ENCODE measurements at regions of chr12 and their contacts with region 1.

Region 1: GRCh38 chr12:100200463-100201181 is at the start of gene ACTR6:
- DNase-seq: peak; percentile 98
- ATAC-seq: peak; percentile 84
- H3K4me3 ChIP-seq: peak within 1 kb of the TSS; percentile 69 to 94 (median 92)
- H3K4me3 Mint-ChIP-seq: peak within 1 kb of the TSS; percentile 90
- H3K27ac ChIP-seq: peak within 1 kb of the TSS; percentile 76 to 93
- H3K27ac Mint-ChIP-seq: peak within 1 kb of the TSS; percentile 91
- H3K4me1 ChIP-seq: peaks cover 14 to 19% of the 10 kb centered on the region in 2 donors
- H3K4me1 Mint-ChIP-seq: peaks cover 26% of the 10 kb centered on the region
- H3K27me3 ChIP-seq: no peaks in the 10 kb centered on the region
- H3K27me3 Mint-ChIP-seq: no peaks in the 10 kb centered on the region
- CTCF ChIP-seq: no peak
- total RNA-seq, gene ACTR6: 28.6 and 30.8 TPM in 2 replicates

Region 2: DNA sequence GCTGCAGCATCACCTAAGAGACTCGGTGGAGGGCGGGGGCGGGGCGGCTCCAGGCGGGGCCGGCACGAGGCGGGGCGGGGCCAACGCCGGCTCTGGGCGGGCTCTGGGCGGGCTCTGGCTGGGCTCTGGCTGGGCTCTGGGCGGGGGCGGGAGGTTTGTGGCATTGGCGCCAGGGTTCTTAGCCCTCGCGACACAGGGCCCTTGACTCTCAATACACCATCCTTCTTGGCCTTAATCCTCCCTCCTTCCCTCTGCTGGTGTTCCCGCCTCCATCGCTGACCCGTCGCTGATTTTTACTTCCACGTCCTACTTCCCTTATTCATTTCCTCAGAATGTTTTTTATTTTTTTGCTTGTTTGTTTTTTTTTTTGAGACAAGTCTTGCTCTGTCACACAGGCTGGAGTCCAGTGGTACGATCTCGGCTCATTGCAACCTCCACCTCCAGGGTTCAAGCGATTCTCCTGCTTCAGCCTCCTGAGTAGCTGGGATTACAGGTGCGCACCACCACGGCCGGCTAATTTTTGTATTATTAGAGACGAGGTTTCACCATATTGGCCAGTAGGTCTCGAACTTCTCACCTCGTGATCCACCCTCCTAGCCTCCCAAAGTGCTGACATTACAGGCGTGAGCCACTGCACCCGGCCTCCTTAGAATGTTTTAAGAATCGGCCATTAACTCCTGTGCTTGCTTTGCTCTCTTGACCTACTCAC is 57.6 kb before region 1 on chr12 and contains the start of gene BLTP3B:
- CTCF ChIA-PET with region 1: interaction called, 14 read pairs
- POLR2A ChIA-PET with region 1: interaction called, 4 read pairs
- intact Hi-C with region 1: loop called (anchors 1 kb)
- DNase-seq: peak; percentile 91
- ATAC-seq: peak; percentile 95
- H3K4me3 ChIP-seq: peak within 1 kb of the TSS; percentile 67 to 97 (median 93)
- H3K4me3 Mint-ChIP-seq: peak within 1 kb of the TSS; percentile 99
- H3K27ac ChIP-seq: peak within 1 kb of the TSS; percentile 92 to 95
- H3K27ac Mint-ChIP-seq: peak within 1 kb of the TSS; percentile 98
- H3K4me1 ChIP-seq: peaks cover 27 to 30% of the 10 kb centered on the region in 2 donors
- H3K4me1 Mint-ChIP-seq: peaks cover 41% of the 10 kb centered on the region
- H3K27me3 ChIP-seq: no peaks in the 10 kb centered on the region
- H3K27me3 Mint-ChIP-seq: no peaks in the 10 kb centered on the region
- CTCF ChIP-seq: no peak
- total RNA-seq, gene BLTP3B: 27.4 and 30.2 TPM in 2 replicates

Region 3: GRCh38 chr12:100163416-100164152 is 37.0 kb before region 1 on chr12:
- CTCF ChIA-PET with region 1: interaction called, 4 read pairs
- POLR2A ChIA-PET with region 1: no interaction called
- intact Hi-C with region 1: loop called (anchors 5 kb)
- DNase-seq: peak; percentile 71
- ATAC-seq: peak; percentile 99
- H3K4me3 ChIP-seq: peak overlapping the region in 1 of 5 experiments; percentile 28
- H3K4me3 Mint-ChIP-seq: peak overlapping the region; percentile 74
- H3K27ac ChIP-seq: no peak overlapping the region
- H3K27ac Mint-ChIP-seq: peak overlapping the region; percentile 73
- H3K4me1 ChIP-seq: peaks cover 8 to 12% of the 10 kb centered on the region in 2 donors
- H3K4me1 Mint-ChIP-seq: peaks cover 13% of the 10 kb centered on the region
- H3K27me3 ChIP-seq: no peaks in the 10 kb centered on the region
- H3K27me3 Mint-ChIP-seq: no peaks in the 10 kb centered on the region
- CTCF ChIP-seq: peak; percentile 28

Region 4: GRCh38 chr12:101670007-101670687 is 1469.5 kb after region 1 on chr12:
- CTCF ChIA-PET with region 1: no interaction called
- POLR2A ChIA-PET with region 1: interaction called, 11 read pairs
- intact Hi-C with region 1: no loop called
- DNase-seq: peak; percentile 73
- ATAC-seq: peak; percentile 60
- H3K4me3 ChIP-seq: no peak overlapping the region
- H3K4me3 Mint-ChIP-seq: peak overlapping the region; percentile 14
- H3K27ac ChIP-seq: no peak overlapping the region
- H3K27ac Mint-ChIP-seq: peak overlapping the region; percentile 50
- H3K4me1 ChIP-seq: peaks cover 22 to 25% of the 10 kb centered on the region in 2 donors
- H3K4me1 Mint-ChIP-seq: peaks cover 22% of the 10 kb centered on the region
- H3K27me3 ChIP-seq: no peaks in the 10 kb centered on the region
- H3K27me3 Mint-ChIP-seq: peaks cover 7% of the 10 kb centered on the region
- CTCF ChIP-seq: peak; percentile 75

Region 5: DNA sequence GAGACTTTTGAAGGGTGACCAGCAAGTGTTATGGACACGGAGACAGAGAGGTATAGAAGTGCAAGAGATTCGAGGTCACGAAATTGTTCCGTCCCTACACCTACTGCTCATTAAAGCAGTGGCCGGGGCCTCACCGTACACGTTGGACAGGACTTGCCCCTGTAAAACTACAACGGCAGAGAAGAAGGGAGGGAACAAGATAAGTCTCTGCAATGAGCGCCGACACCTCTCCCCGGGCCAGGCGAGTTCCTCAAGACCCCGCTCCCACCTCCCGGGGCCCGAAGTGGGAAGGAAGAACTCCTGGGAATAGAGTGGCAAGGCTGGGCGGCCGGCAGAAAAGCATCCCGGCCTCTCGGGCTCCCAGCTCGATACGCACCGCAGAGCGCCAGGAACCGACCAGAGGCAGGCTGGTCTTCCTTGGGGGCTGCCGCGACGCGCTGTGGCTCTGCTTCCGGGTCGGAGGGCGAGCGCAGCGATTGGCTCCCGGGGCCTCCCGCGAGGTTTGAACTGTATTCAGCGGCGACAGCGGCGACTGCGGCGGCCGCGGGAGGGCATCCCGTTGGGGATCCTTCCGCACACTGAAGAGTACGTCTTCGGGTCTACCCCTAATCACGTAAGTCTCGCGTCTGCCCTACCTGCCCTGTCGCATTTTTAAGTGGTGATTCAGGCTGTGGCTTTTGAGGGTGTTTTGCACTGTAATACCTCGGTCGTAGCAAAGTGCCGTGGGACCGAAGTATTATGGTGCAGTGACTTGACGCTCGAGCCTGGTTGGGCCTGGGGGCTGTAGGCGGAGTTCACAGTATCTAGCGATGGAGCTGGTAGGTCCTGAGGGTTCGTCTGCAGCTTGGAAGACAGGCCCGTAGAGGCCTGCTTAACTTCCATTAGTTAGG is 1919.3 kb after region 1 on chr12 and contains the starts of genes NUP37 and PARPBP:
- CTCF ChIA-PET with region 1: no interaction called
- POLR2A ChIA-PET with region 1: no interaction called
- intact Hi-C with region 1: loop called (anchors 5 kb)
- DNase-seq: peak; percentile 92
- ATAC-seq: peak; percentile 98
- H3K4me3 ChIP-seq: peak within 1 kb of the TSS; percentile 82 to 90 (median 84)
- H3K4me3 Mint-ChIP-seq: peak within 1 kb of the TSS; percentile 89
- H3K27ac ChIP-seq: peak within 1 kb of the TSS; percentile 80 to 88
- H3K27ac Mint-ChIP-seq: peak within 1 kb of the TSS; percentile 91
- H3K4me1 ChIP-seq: peaks cover 15 to 18% of the 10 kb centered on the region in 2 donors
- H3K4me1 Mint-ChIP-seq: peaks cover 16% of the 10 kb centered on the region
- H3K27me3 ChIP-seq: no peaks in the 10 kb centered on the region
- H3K27me3 Mint-ChIP-seq: no peaks in the 10 kb centered on the region
- CTCF ChIP-seq: no peak
- total RNA-seq, gene NUP37: 19.1 and 22.1 TPM in 2 replicates
- total RNA-seq, gene PARPBP: 5.2 and 6.6 TPM in 2 replicates

Measured in B cell (primary cell).